H1 (cell line): ENCODE measurements at regions of chr16 and their contacts with region 1.

Region 1: GRCh38 chr16:86519649-86520316 is 9.5 kb downstream of the FOXF1 start:
- DNase-seq: peak in 1 of 2 experiments; percentile 87
- H3K4me3 ChIP-seq: no peak overlapping the region
- H3K27ac ChIP-seq: no peak overlapping the region
- H3K4me1 ChIP-seq: peaks cover 3 to 9% (median 5%) of the 10 kb centered on the region in 4 experiments; a peak in 6 of 7 replicates
- H3K27me3 ChIP-seq: peaks cover 41 to 55% (median 47%) of the 10 kb centered on the region in 4 experiments
- CTCF ChIP-seq: peak; percentile 79 to 88 (median 83)
- EP300 ChIP-seq: no peak
- POLR2A ChIP-seq: no peak
- RAD21 ChIP-seq: peak; percentile 86 to 90

Region 2: DNA sequence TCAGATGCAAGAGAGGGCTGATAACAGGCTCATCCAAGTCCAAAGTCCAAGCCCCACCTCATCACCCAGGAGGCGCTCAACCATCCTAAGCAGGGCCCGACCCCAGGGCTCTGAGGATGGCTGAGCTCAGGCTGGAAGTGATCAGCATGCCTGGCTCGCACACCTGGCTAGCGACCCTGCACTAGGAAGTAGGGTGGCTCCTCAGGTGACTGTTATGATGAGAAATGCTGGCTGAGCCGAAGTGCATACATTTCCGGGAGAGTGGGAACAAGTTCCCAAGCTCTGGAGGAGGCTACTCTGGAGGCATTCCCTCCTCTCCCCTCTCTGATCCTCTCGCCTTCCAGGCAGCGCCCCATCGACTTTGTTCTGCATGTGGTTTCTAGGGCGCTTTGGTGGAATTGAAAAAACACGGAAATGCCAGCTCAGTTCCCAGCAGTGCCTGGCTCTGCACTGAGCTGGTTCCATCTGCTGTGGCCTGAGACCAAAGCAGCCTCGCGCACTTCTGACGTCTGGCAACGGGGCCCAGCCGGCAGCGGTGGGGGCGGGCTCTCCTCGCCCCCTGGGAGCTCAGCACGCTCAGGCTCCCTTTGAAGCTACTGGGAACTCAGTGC is 490.5 kb before region 1 on chr16:
- CTCF ChIA-PET with region 1: interaction called, 12 read pairs
- POLR2A ChIA-PET with region 1: no interaction called
- DNase-seq: no peak
- H3K4me3 ChIP-seq: no peak overlapping the region
- H3K27ac ChIP-seq: no peak overlapping the region; the same call in 1 of the 2 replicates
- H3K4me1 ChIP-seq: peaks cover 0 to 13% (median 7%) of the 10 kb centered on the region in 4 experiments; a peak in 6 of 7 replicates
- H3K27me3 ChIP-seq: peaks cover 0 to 3% (median 0%) of the 10 kb centered on the region in 4 experiments; a peak in 2 of 7 replicates
- CTCF ChIP-seq: no peak
- EP300 ChIP-seq: no peak
- POLR2A ChIP-seq: no peak
- RAD21 ChIP-seq: no peak

Region 3: GRCh38 chr16:86072328-86073102 is 447.3 kb before region 1 on chr16:
- CTCF ChIA-PET with region 1: interaction called, 75 read pairs
- POLR2A ChIA-PET with region 1: interaction called, 3 read pairs
- DNase-seq: peak in 1 of 2 experiments; percentile 80
- H3K4me3 ChIP-seq: no peak overlapping the region
- H3K27ac ChIP-seq: no peak overlapping the region
- H3K4me1 ChIP-seq: peaks cover 2 to 15% (median 5%) of the 10 kb centered on the region in 4 experiments; a peak in 6 of 7 replicates
- H3K27me3 ChIP-seq: peaks cover 0 to 2% (median 0%) of the 10 kb centered on the region in 4 experiments; a peak in 2 of 7 replicates
- CTCF ChIP-seq: peak; percentile 69 to 79 (median 70)
- EP300 ChIP-seq: no peak
- POLR2A ChIP-seq: no peak
- RAD21 ChIP-seq: peak; percentile 79 to 83

Region 4: GRCh38 chr16:86285938-86286921 is 233.6 kb before region 1 on chr16:
- CTCF ChIA-PET with region 1: interaction called, 11 read pairs
- POLR2A ChIA-PET with region 1: interaction called, 3 read pairs
- DNase-seq: no peak
- H3K4me3 ChIP-seq: peak overlapping the region; percentile 18 to 62 (median 46)
- H3K27ac ChIP-seq: no peak overlapping the region
- H3K4me1 ChIP-seq: peaks cover 6 to 32% (median 19%) of the 10 kb centered on the region in 4 experiments
- H3K27me3 ChIP-seq: peaks cover 45 to 82% (median 73%) of the 10 kb centered on the region in 4 experiments
- CTCF ChIP-seq: no peak
- EP300 ChIP-seq: no peak
- POLR2A ChIP-seq: no peak
- RAD21 ChIP-seq: no peak

Region 5: GRCh38 chr16:86396897-86397296 is 122.9 kb before region 1 on chr16:
- CTCF ChIA-PET with region 1: no interaction called
- POLR2A ChIA-PET with region 1: no interaction called
- DNase-seq: no peak
- H3K4me3 ChIP-seq: no peak overlapping the region
- H3K27ac ChIP-seq: no peak overlapping the region
- H3K4me1 ChIP-seq: peaks cover 0 to 3% (median 0%) of the 10 kb centered on the region in 4 experiments; a peak in 1 of 7 replicates
- H3K27me3 ChIP-seq: no peaks in the 10 kb centered on the region
- CTCF ChIP-seq: no peak
- EP300 ChIP-seq: no peak
- POLR2A ChIP-seq: no peak
- RAD21 ChIP-seq: no peak

Region 6: GRCh38 chr16:86499889-86500707 is 19.7 kb before region 1 on chr16:
- CTCF ChIA-PET with region 1: interaction called, 16 read pairs
- POLR2A ChIA-PET with region 1: interaction called, 4 read pairs
- DNase-seq: no peak
- H3K4me3 ChIP-seq: no peak overlapping the region; a peak in 2 of 8 replicates
- H3K27ac ChIP-seq: no peak overlapping the region
- H3K4me1 ChIP-seq: peaks cover 1 to 19% (median 12%) of the 10 kb centered on the region in 4 experiments
- H3K27me3 ChIP-seq: peaks cover 98 to 100% (median 99%) of the 10 kb centered on the region in 4 experiments
- CTCF ChIP-seq: no peak
- EP300 ChIP-seq: no peak
- POLR2A ChIP-seq: no peak
- RAD21 ChIP-seq: no peak